Endothelial cell of umbilical vein (primary cell): ENCODE measurements at regions of chr6 and their contacts with region 1.

Region 1: DNA sequence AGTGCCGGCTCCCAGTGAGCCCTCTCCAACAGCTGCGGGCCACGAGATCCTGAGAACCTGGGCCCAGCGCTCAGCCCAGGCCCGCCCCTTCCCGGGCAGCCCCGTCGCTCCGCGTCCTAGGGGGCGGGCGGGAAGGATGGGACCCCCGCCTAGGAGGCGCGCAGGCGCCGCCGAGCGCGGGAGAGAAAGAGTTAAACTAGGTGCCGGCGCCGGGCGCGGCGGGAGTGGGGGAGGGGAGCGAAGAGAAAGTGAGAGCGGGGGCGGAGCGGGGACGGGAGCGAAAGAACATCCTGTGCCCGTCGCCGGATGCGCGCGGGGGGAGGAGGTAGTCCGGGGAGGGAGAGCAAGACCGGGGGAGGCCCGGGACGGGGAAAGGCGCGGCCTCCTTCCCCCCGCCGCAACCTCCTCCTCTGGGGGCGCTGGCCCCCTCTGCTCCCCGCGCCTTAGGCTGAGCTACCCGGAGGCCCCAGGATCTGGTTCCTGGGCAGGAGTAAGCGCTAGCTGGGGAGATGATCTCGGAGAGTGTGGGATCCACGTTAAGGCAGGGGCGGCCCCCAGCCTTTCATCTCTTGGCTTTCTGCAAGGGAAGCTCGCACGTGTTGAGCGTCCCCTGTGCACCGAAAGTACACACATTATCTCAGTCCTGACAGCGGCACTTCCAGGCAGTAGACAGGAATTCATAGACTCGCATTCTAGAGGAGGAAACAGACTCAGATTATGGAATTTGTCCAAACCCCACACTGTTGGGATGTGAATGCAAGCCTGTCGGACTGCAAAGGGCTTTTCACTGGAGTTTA is 4.9 kb upstream of the ARMC12 start:
- DNase-seq: peak; percentile 87
- H3K4me3 ChIP-seq: peak overlapping the region; percentile 51 to 73 (median 61)
- H3K27ac ChIP-seq: peak overlapping the region; percentile 88
- H3K4me1 ChIP-seq: peaks cover 34% of the 10 kb centered on the region
- H3K27me3 ChIP-seq: no peaks in the 10 kb centered on the region
- CTCF ChIP-seq: peak; percentile 5 to 28
- POLR2A ChIP-seq: peak; percentile 75

Region 2: DNA sequence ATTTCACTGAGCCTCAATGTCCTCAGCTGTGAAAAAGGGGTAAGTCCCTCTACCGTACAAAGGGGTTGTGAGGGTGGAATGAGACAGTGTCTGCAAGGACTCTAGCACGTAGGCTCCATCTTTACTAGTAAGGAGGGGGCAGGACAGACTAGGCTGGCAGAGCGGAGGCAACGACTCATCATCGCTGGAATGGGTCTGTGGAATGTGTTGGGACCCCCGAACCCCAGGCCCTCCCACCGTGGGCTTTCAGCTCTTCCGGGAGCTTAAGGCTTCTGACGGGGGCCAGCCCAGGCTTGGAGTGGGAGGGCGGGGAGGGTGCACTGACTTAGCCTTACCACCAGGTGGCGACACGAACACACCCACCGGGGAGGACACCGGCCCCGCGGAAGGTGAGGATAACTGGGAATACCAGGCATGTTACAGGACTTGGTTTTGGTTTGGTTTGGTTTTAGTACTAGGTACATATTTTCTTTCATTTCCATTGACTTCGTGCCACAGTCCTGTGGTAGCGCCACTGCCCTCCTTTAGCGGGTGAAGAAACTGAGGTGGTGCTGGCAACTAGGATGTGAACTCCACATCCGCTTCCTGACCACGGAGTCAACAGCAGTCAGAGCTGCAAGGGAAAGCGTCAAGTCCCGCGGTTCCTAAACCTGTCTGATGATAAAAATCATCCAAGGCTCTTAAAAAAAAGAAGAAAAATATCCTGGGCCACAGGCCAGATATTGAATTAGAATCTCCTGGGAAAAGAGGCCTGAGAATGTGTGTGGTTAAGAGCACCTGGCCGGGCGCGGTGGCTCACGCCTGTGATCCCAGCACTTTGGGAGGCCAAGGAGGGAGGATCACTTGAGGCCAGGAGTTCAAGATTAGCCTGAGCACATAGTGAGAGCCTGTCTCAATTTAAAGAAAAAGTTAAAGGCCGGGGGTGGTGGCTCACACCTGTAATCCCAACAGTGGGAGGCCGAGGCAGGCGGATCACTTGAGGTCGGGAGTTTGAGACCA is 209.0 kb before region 1 on chr6:
- CTCF ChIA-PET with region 1: interaction called, 252 read pairs
- POLR2A ChIA-PET with region 1: no interaction called
- dilution Hi-C with region 1: no loop called
- intact Hi-C with region 1: loop called (anchors 1 kb)
- DNase-seq: peak; percentile 72
- H3K4me3 ChIP-seq: peak overlapping the region in 2 of 3 experiments; percentile 33 to 46
- H3K27ac ChIP-seq: no peak overlapping the region
- H3K4me1 ChIP-seq: no peaks in the 10 kb centered on the region
- H3K27me3 ChIP-seq: no peaks in the 10 kb centered on the region
- CTCF ChIP-seq: peak; percentile 80 to 93
- POLR2A ChIP-seq: no peak

Region 3: DNA sequence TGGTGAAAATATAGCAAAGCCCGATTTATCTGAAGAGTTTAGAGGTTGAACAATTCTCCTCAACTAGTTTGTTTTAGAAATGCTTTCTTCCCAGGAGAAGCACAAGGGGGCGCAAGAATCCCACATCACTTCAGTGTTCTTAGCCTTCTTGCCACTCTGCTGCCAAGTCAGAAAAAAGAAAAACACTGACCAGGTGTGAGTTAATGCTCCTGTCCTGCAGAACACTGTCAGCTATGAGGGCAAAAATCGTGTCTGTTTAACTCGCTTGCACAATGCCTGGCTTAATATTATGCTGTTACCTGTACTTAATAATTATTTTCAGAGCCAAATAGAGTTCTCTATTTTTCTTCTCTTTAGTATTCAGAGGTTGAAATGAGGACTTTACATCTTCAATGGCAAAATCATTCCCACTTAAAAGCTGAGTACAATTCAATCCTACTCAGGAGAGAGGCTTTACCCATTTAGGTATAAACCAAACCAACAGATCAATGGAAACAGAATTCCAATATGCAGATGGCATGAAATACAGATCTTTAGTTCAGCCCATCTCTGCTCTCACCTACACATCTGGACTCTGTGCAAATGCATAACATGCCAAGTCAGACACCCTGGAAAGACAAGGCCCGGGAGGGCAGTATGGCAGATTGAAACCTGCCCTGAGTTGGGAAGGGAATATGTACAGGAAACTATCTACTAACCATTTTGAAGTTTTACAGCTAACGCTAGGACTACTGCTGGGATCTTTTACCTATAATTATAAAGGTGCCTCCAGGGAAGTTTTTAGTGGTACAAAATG is 147.8 kb before region 1 on chr6:
- CTCF ChIA-PET with region 1: interaction called, 89 read pairs
- POLR2A ChIA-PET with region 1: no interaction called
- dilution Hi-C with region 1: no loop called
- intact Hi-C with region 1: loop called (anchors 1 kb)
- DNase-seq: peak; percentile 82
- H3K4me3 ChIP-seq: no peak overlapping the region
- H3K27ac ChIP-seq: no peak overlapping the region
- H3K4me1 ChIP-seq: no peaks in the 10 kb centered on the region
- H3K27me3 ChIP-seq: no peaks in the 10 kb centered on the region
- CTCF ChIP-seq: peak; percentile 69 to 78
- POLR2A ChIP-seq: no peak

Region 4: DNA sequence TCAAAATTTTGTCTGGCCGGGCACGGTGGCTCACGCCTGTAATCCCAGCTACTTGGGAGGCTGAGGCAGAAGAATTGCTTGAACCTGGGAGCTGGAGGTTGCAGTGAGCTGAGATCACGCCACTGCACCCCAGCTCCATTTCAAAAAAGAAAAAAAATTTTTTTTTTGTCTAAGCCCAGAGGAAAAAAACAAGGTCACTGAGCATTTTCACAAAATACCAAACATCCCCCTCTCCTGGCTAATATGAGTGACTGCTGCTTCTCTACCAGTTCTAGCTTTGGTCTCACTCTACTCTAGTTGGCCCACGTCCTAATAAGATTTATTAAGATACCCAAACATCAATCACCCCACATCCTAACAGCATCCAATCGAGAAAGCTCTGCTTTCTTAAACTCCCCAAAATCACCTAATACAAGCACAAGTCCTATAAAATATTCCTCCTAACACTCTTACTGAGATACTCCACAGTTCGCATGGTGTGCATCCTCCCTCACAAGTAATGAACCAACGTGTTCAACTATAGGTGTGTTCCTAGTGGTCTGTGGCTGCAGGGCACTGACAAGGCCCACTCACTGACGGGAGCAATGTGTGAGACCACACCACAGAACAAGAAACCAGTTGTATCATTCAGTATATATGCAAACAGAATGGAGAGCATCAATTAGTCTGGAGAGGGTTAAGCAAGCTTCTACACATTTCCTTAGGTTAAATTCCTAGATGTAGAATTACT is 107.4 kb before region 1 on chr6:
- CTCF ChIA-PET with region 1: interaction called, 47 read pairs
- POLR2A ChIA-PET with region 1: no interaction called
- dilution Hi-C with region 1: no loop called
- intact Hi-C with region 1: loop called (anchors 1 kb)
- DNase-seq: peak; percentile 42
- H3K4me3 ChIP-seq: no peak overlapping the region
- H3K27ac ChIP-seq: no peak overlapping the region
- H3K4me1 ChIP-seq: no peaks in the 10 kb centered on the region
- H3K27me3 ChIP-seq: no peaks in the 10 kb centered on the region
- CTCF ChIP-seq: peak; percentile 23 to 41
- POLR2A ChIP-seq: no peak

Region 5: GRCh38 chr6:35663447-35664235 is 68.3 kb before region 1 on chr6:
- CTCF ChIA-PET with region 1: interaction called, 22 read pairs
- POLR2A ChIA-PET with region 1: no interaction called
- dilution Hi-C with region 1: no loop called
- intact Hi-C with region 1: no loop called
- DNase-seq: peak; percentile 72
- H3K4me3 ChIP-seq: no peak overlapping the region
- H3K27ac ChIP-seq: peak overlapping the region; percentile 74
- H3K4me1 ChIP-seq: peaks cover 42% of the 10 kb centered on the region
- H3K27me3 ChIP-seq: no peaks in the 10 kb centered on the region
- CTCF ChIP-seq: no peak
- POLR2A ChIP-seq: no peak

Region 6: GRCh38 chr6:35719830-35720733 is 11.9 kb before region 1 on chr6:
- CTCF ChIA-PET with region 1: interaction called, 38 read pairs
- POLR2A ChIA-PET with region 1: no interaction called
- dilution Hi-C with region 1: no loop called
- intact Hi-C with region 1: loop called (anchors 1 kb)
- DNase-seq: peak; percentile 62
- H3K4me3 ChIP-seq: peak overlapping the region in 1 of 3 experiments; percentile 27
- H3K27ac ChIP-seq: peak overlapping the region; percentile 57
- H3K4me1 ChIP-seq: peaks cover 31% of the 10 kb centered on the region
- H3K27me3 ChIP-seq: no peaks in the 10 kb centered on the region
- CTCF ChIP-seq: no peak
- POLR2A ChIP-seq: peak; percentile 43

Region 7: DNA sequence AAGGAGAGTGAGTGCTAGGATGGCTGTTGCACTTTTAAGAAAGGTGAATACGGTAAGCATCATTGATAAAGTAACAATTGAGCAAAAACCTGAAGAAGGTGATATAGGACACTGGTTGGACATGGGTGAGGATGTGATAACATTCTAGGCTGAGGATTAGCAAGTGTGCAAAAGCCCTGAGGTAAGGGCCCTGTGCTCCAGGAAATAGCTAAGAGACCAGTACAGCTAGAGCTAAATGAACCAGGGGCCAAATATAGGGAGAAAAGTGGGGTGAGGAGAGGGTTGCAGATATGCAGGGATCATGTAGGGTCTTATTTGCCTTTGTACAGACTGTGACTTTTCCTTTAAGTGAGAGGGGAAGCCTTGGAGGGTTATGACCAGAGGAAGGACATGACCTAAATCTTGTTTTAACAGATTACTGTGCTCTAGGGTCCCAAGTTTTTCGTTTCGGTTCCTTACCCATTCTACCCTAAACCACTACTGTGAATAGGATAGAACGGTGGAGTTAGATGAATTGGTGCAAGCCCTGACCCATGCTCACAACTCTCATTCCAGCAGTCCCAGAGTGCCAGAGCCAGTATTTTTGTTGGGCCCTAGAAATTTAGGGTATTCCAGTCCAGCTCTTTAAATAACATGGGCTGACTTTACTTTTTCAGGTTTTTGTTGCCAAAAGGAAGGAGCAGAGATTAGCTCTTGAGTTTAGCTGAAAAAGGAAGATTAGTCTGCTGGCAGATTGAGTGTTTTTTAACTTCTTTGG is 306.4 kb after region 1 on chr6:
- CTCF ChIA-PET with region 1: no interaction called
- POLR2A ChIA-PET with region 1: no interaction called
- dilution Hi-C with region 1: no loop called
- intact Hi-C with region 1: no loop called
- DNase-seq: peak; percentile 41
- H3K4me3 ChIP-seq: no peak overlapping the region
- H3K27ac ChIP-seq: no peak overlapping the region
- H3K4me1 ChIP-seq: peaks cover 7% of the 10 kb centered on the region
- H3K27me3 ChIP-seq: no peaks in the 10 kb centered on the region
- CTCF ChIP-seq: no peak
- POLR2A ChIP-seq: no peak